Psoas muscle (tissue), 8 donors: ENCODE measurements at regions of chr2 and their contacts with region 1.

Region 1: DNA sequence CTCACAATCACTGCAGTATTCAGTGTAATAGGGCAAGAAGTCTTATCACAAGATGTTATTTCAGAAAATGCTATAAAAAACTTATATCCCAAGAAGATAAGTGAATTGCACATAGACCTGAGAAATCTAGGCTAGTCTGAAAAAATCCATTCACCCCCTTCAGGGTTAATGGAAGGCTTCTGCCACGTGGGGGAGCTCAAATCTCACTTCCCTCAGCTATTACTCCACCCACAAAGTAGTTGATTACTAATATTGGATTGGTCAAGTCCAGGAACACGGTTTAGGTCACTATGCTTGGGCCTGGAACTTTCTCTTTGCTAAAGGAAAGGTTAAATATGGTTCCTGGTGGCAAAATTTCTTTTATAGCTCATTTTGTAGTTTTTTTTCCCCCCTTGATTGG is 51.2 kb upstream of the ADAM23 start:
- DNase-seq: no peak
- ATAC-seq: peak; percentile 67 to 77 (median 74)
- H3K4me3 ChIP-seq: no peak overlapping the region
- H3K27ac ChIP-seq: no peak overlapping the region
- H3K4me1 ChIP-seq: no peaks in the 10 kb centered on the region
- H3K27me3 ChIP-seq: no peaks in the 10 kb centered on the region
- CTCF ChIP-seq: peak; percentile 50

Region 2: DNA sequence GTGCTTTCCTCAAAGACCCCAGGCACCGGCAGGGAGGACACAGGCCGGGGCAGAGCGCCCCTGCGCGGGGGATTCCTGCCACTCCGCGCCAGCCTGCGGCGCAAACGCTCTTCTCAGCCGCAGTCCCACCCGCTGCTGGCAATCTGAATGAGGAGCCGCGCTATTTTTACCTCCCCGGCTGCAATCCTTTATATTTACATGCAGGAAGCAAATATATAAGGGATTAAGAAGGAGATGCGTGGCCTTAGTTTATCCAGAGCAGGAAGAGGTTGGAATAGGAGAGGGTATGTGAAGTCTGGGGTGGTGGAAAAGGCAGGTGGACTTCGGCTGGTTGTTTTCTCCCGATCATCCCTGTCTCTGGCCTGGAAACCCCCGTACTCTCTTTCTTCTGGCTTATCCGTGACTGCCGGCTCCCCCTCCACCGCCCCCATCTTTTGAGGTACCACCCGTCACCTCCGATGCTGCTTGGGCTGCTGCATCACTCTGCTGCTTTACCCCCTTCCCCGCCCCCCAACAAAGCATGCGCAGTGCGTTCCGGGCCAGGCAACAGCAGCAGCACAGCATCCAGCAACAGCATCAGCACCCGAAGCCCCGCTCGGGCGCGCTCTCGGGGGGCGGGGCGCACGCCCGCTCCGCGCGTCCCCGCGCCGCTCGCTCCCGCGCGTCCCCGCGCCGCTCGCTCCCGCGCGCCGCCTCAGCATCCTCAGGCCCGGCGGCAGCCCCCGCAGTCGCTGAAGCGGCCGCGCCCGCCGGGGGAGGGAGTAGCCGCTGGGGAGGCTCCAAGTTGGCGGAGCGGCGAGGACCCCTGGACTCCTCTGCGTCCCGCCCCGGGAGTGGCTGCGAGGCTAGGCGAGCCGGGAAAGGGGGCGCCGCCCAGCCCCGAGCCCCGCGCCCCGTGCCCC is 51.0 kb after region 1 on chr2 and contains the start of gene ADAM23:
- intact Hi-C with region 1: loop called in 1 of 2 experiments (anchors 5 kb)
- DNase-seq: peak; percentile 54 to 77
- ATAC-seq: peak; percentile 73 to 92 (median 80)
- H3K4me3 ChIP-seq: peak within 1 kb of the TSS; percentile 79
- H3K27ac ChIP-seq: peak within 1 kb of the TSS; percentile 70
- H3K4me1 ChIP-seq: peaks cover 13% of the 10 kb centered on the region
- H3K27me3 ChIP-seq: no peaks in the 10 kb centered on the region
- CTCF ChIP-seq: peak; percentile 27
- total RNA-seq, gene ADAM23: 6.0 to 9.2 (median 6.3) TPM

Region 3: DNA sequence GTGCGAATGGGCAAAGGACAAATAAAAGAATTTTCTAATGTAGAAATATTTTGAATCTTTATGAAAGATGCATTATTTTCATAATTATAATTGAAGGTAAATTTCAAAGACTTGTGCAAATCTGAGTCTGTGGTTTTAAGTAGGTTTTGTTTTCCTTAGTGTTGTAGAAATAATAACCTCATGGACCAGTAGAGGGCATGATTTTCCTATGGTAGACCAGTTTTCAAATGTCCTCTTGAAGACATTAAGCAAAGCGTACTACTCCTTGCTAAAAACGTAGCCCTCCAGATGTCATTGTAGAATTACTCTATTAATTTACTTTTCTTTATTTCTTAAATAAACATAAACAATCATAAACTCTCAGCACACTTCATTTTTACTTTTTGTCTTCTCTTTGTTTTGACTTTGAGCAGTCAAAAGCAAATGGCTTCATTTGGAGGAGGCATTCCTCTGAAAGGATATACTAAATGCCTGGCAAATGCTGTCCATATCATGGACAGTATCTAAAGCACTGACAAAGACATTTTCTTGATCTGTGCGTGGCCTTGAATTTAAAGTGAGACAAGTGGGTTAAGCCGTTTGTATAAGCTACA is 164.3 kb after region 1 on chr2:
- intact Hi-C with region 1: loop called (anchors 5 to 10 kb)
- DNase-seq: no peak
- ATAC-seq: peak in 1 of 4 donors; percentile 65
- H3K4me3 ChIP-seq: no peak overlapping the region
- H3K27ac ChIP-seq: no peak overlapping the region
- H3K4me1 ChIP-seq: no peaks in the 10 kb centered on the region
- H3K27me3 ChIP-seq: no peaks in the 10 kb centered on the region
- CTCF ChIP-seq: peak; percentile 54

Region 4: GRCh38 chr2:206561962-206562361 is 169.8 kb after region 1 on chr2:
- intact Hi-C with region 1: loop called (anchors 5 to 10 kb)
- DNase-seq: no peak
- ATAC-seq: no peak
- H3K4me3 ChIP-seq: no peak overlapping the region
- H3K27ac ChIP-seq: no peak overlapping the region
- H3K4me1 ChIP-seq: peaks cover 4% of the 10 kb centered on the region
- H3K27me3 ChIP-seq: no peaks in the 10 kb centered on the region
- CTCF ChIP-seq: no peak

Region 5: DNA sequence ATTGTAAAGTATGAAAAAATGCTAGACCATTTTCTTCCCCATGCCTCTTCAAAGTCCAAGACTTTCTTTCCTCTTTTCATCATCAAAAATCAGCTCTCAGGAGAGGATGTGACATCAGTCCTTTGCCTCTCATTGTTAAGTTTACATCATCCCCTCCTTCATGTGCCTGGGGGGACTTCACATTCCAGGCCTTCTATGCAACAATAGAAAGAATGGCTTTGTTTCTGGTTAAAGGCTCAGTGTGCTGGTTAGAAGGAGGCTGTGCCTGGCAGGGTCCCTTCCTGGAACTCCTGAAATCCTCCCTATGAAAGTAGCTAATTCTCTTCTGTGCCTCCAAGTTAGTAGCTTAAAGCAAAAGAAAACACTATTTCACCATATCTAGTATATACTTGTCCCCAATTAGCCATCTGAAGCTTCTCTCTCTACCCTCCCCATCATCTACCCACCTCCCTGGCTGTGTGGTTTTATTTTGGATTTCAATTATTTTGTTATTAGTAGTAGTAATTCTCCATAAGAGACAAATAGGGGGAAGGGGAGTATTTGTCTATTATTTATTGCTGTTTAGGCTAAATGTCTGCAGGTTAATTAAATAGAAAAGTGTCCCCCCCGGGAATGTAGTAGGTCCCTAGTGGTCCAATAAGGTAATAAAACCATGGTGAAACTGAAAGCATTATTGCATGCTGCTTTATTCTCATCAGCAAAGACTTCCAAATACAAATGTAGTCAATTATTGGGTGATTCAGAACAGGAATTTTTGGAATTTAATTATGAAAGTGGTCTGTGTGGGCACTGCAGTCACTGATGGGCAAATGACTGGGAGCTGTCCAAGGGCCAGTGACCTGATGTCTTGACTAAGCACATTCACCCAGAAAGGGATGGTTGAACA is 616.2 kb after region 1 on chr2:
- intact Hi-C with region 1: no loop called
- DNase-seq: no peak
- ATAC-seq: no peak
- H3K4me3 ChIP-seq: no peak overlapping the region
- H3K27ac ChIP-seq: no peak overlapping the region
- H3K4me1 ChIP-seq: no peaks in the 10 kb centered on the region
- H3K27me3 ChIP-seq: no peaks in the 10 kb centered on the region
- CTCF ChIP-seq: no peak